ENCODE measurements at regions of chr7 and their contacts with region 1.

Region 1: GRCh38 chr7:121395961-121396757 is at the start of gene FAM3C:
- DNase-seq: peak; percentile 69 to 80 (median 79)
- H3K4me3 ChIP-seq: peak within 1 kb of the TSS; percentile 70
- H3K4me3 Mint-ChIP-seq: peak within 1 kb of the TSS; percentile 84 to 94 (median 88)
- H3K27ac ChIP-seq: peak within 1 kb of the TSS; percentile 69
- H3K27ac Mint-ChIP-seq: peak within 1 kb of the TSS; percentile 76 to 95 (median 90)
- H3K4me1 ChIP-seq: peaks cover 15% of the 10 kb centered on the region
- H3K4me1 Mint-ChIP-seq: peaks cover 32 to 46% (median 35%) of the 10 kb centered on the region in 3 donors
- H3K27me3 ChIP-seq: no peaks in the 10 kb centered on the region
- H3K27me3 Mint-ChIP-seq: no peaks in the 10 kb centered on the region
- total RNA-seq, gene FAM3C: 47.3 to 51.2 TPM

Region 2: DNA sequence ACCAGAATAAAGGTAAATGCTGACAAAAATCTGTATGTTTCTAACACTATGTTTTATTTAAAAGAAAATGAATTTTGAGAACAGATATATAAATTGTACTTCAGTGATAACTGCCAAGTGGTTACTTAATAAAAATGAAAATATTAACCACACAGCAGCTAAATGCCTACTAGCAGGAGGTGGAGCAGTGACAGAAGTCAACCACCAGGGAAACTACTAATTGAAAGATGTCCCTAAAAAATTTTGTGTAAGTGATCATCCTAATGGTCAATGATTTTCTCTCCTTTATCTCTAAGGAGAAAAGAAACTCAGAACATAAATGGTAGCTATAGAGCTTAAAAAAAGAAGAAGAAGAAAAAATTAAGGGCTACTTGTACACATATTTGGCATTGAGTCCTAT is 44.5 kb before region 1 on chr7:
- CTCF ChIA-PET with region 1: no interaction called
- POLR2A ChIA-PET with region 1: no interaction called
- DNase-seq: no peak
- H3K4me3 ChIP-seq: no peak overlapping the region
- H3K4me3 Mint-ChIP-seq: no peak overlapping the region
- H3K27ac ChIP-seq: no peak overlapping the region
- H3K27ac Mint-ChIP-seq: no peak overlapping the region
- H3K4me1 ChIP-seq: no peaks in the 10 kb centered on the region
- H3K4me1 Mint-ChIP-seq: peaks cover 0 to 3% (median 0%) of the 10 kb centered on the region in 3 donors
- H3K27me3 ChIP-seq: no peaks in the 10 kb centered on the region
- H3K27me3 Mint-ChIP-seq: no peaks in the 10 kb centered on the region

Region 3: DNA sequence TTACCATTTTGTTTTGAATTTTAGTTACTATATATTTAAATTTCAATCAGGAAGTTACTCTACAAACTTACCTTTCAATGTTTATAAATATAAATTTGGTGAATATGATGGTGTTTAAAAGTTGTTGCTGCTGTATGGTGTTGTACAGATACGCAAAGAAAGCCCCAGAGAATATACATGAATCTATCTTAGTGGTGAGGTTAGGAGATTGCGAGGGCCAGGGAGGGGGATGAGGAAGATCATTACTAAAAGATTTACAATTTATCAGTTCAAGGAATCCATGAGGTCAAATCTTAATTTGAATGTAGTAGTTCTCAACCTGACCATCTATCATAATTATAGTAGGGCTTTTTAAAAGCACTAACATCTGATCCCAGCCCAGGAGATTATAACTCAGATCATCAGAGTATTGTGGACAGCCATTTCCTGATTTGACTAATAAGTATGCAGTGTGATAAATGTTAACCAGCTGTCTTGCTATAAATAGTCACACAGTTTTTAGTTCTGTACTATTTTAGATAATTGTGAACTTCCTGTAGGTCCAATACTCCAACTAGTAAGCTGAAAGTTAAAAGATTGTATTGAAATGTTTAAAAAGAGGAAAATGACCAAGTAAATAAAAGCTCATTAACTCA is 23.7 kb before region 1 on chr7:
- CTCF ChIA-PET with region 1: interaction called, 31 read pairs
- POLR2A ChIA-PET with region 1: interaction called, 12 read pairs
- DNase-seq: no peak
- H3K4me3 ChIP-seq: no peak overlapping the region
- H3K4me3 Mint-ChIP-seq: peak overlapping the region in 6 of 7 donors; percentile 33 to 63 (median 43)
- H3K27ac ChIP-seq: no peak overlapping the region
- H3K27ac Mint-ChIP-seq: peak overlapping the region; percentile 10 to 81 (median 52)
- H3K4me1 ChIP-seq: no peaks in the 10 kb centered on the region
- H3K4me1 Mint-ChIP-seq: peaks cover 43 to 71% (median 46%) of the 10 kb centered on the region in 3 donors
- H3K27me3 ChIP-seq: no peaks in the 10 kb centered on the region
- H3K27me3 Mint-ChIP-seq: no peaks in the 10 kb centered on the region

Region 4: GRCh38 chr7:121385800-121386179 is 10.4 kb before region 1 on chr7:
- CTCF ChIA-PET with region 1: interaction called, 41 read pairs
- POLR2A ChIA-PET with region 1: interaction called, 11 read pairs
- DNase-seq: peak in 1 of 5 donors; percentile 10
- H3K4me3 ChIP-seq: no peak overlapping the region
- H3K4me3 Mint-ChIP-seq: peak overlapping the region in 3 of 7 donors; percentile 2 to 19 (median 10)
- H3K27ac ChIP-seq: no peak overlapping the region
- H3K27ac Mint-ChIP-seq: peak overlapping the region in 4 of 8 donors; percentile 10 to 41 (median 13)
- H3K4me1 ChIP-seq: peaks cover 40% of the 10 kb centered on the region
- H3K4me1 Mint-ChIP-seq: peaks cover 70 to 92% (median 83%) of the 10 kb centered on the region in 3 donors
- H3K27me3 ChIP-seq: no peaks in the 10 kb centered on the region
- H3K27me3 Mint-ChIP-seq: no peaks in the 10 kb centered on the region

Region 5: GRCh38 chr7:121440857-121441503 is 44.8 kb after region 1 on chr7:
- CTCF ChIA-PET with region 1: interaction called, 43 read pairs
- POLR2A ChIA-PET with region 1: interaction called, 5 read pairs
- DNase-seq: no peak
- H3K4me3 ChIP-seq: no peak overlapping the region
- H3K4me3 Mint-ChIP-seq: peak overlapping the region; percentile 62 to 81 (median 73)
- H3K27ac ChIP-seq: no peak overlapping the region
- H3K27ac Mint-ChIP-seq: peak overlapping the region; percentile 36 to 99 (median 86)
- H3K4me1 ChIP-seq: peaks cover 22% of the 10 kb centered on the region
- H3K4me1 Mint-ChIP-seq: peaks cover 39 to 55% (median 51%) of the 10 kb centered on the region in 3 donors
- H3K27me3 ChIP-seq: no peaks in the 10 kb centered on the region
- H3K27me3 Mint-ChIP-seq: no peaks in the 10 kb centered on the region

Measured in CD8-positive, alpha-beta memory T cell (primary cell).